Psoas muscle (tissue), 8 donors: ENCODE measurements at regions of chr3 and their contacts with region 1.

Region 1: GRCh38 chr3:78857494-78858111 is 910.2 kb downstream of the ROBO1 start:
- DNase-seq: no peak
- ATAC-seq: no peak
- H3K4me3 ChIP-seq: no peak overlapping the region
- H3K27ac ChIP-seq: no peak overlapping the region
- H3K4me1 ChIP-seq: no peaks in the 10 kb centered on the region
- H3K27me3 ChIP-seq: no peaks in the 10 kb centered on the region
- CTCF ChIP-seq: no peak

Region 2: GRCh38 chr3:78398401-78398800 is 459.2 kb before region 1 on chr3:
- intact Hi-C with region 1: loop called in 1 of 2 experiments (anchors 10 kb)
- DNase-seq: no peak
- ATAC-seq: no peak
- H3K4me3 ChIP-seq: no peak overlapping the region
- H3K27ac ChIP-seq: no peak overlapping the region
- H3K4me1 ChIP-seq: no peaks in the 10 kb centered on the region
- H3K27me3 ChIP-seq: no peaks in the 10 kb centered on the region
- CTCF ChIP-seq: no peak